Heart left ventricle (tissue), 16 donors: ENCODE measurements at regions of chr9 and their contacts with region 1.

Region 1: GRCh38 chr9:561430-561829 is 280.1 kb upstream of the DMRT1 start:
- DNase-seq: no peak
- ATAC-seq: peak in 1 of 4 donors; percentile 24
- H3K4me3 ChIP-seq: no peak overlapping the region
- H3K27ac ChIP-seq: no peak overlapping the region
- H3K4me1 ChIP-seq: peaks cover 0 to 46% (median 11%) of the 10 kb centered on the region in 12 donors
- H3K27me3 ChIP-seq: no peaks in the 10 kb centered on the region
- CTCF ChIP-seq: no peak
- POLR2A ChIP-seq: no peak

Region 2: DNA sequence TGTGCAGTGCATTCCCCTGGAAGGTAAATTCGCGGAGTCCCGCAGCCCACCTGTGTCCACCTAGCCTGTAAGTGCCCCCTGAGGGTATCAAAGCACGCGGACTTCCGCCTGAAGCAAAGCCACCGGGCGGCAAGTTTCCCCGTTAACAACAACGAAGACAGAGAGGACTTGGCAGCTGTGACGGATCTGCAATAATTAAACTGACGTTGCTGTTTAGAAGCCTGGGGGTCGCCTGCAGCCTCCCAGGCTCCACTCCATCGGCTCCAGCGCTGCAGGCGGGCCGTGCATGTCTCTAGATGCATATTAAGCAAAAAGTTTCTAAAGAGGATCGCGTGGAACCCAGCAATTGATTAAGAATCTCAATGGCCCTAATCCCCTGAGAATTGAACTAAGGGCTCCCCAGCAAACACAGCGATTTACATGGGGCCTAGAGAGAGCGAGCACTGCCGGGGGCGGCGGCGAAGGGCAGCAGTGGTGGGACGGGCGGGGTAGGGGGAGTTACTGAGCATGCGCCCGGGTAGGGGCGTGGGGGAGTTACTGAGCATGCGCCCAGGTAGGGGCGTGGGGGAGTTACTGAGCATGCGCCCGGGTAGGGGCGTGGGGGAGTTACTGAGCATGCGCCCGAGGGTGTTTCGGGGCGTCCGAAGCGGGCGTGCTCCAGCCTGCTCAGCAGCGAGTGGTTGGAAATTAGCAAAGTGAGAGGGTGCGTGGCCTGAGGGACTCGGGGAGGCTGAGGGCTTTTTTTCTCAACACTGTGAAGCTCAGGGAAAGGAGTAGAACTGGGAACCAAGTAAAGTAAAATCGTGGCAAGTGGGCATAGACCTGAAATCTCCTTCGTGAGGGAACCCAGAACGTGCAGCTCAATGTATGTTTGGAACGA is 91.5 kb before region 1 on chr9:
- intact Hi-C with region 1: loop called in 1 of 10 experiments (anchors 5 kb)
- DNase-seq: peak; percentile 79 to 92 (median 91)
- ATAC-seq: peak; percentile 96 to 99 (median 98)
- H3K4me3 ChIP-seq: peak overlapping the region in 11 of 12 donors; percentile 43 to 76 (median 64)
- H3K27ac ChIP-seq: peak overlapping the region in 11 of 12 donors; percentile 75 to 91 (median 83)
- H3K4me1 ChIP-seq: peaks cover 0 to 30% (median 11%) of the 10 kb centered on the region in 12 donors
- H3K27me3 ChIP-seq: no peaks in the 10 kb centered on the region
- CTCF ChIP-seq: no peak
- POLR2A ChIP-seq: peak in 1 of 2 donors; percentile 70

Region 3: DNA sequence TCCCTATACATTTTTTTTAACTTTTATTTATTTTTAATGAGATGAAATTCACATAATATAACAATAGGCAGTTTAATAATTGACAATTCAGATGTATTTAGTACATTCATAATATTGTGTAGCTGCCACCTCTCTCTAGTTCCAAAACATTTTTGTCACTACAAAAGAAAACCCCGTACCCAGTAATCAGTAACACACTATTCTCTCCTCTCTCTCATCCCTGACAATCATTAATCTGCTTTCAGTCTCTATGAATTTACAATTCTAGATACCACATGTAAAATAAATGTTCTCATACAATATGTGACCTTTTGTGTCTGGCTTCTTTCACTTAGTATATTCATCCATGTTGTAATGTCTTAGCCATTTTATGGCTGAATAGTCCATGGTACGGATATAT is 35.3 kb after region 1 on chr9:
- intact Hi-C with region 1: loop called in 2 of 10 experiments (anchors 5 to 10 kb)
- DNase-seq: no peak
- ATAC-seq: no peak
- H3K4me3 ChIP-seq: peak overlapping the region in 6 of 12 donors; percentile 1 to 51 (median 43)
- H3K27ac ChIP-seq: peak overlapping the region in 10 of 12 donors; percentile 14 to 87 (median 74)
- H3K4me1 ChIP-seq: peaks cover 0 to 20% (median 0%) of the 10 kb centered on the region in 12 donors
- H3K27me3 ChIP-seq: no peaks in the 10 kb centered on the region
- CTCF ChIP-seq: no peak
- POLR2A ChIP-seq: no peak